ENCODE measurements at regions of chrX and their contacts with region 1.

Region 1: GRCh38 chrX:110853610-110854009 is 58.0 kb upstream of the CHRDL1 start:
- DNase-seq: no peak
- ATAC-seq: peak; percentile 72; the same call in 2 of the 3 replicates
- H3K4me3 ChIP-seq: no peak overlapping the region
- H3K27ac ChIP-seq: no peak overlapping the region
- H3K4me1 ChIP-seq: no peaks in the 10 kb centered on the region
- H3K27me3 ChIP-seq: no peaks in the 10 kb centered on the region
- CTCF ChIP-seq: peak; percentile 32; the same call in 1 of the 2 replicates
- EP300 ChIP-seq: no peak
- POLR2A ChIP-seq: no peak
- RAD21 ChIP-seq: no peak

Region 2: DNA sequence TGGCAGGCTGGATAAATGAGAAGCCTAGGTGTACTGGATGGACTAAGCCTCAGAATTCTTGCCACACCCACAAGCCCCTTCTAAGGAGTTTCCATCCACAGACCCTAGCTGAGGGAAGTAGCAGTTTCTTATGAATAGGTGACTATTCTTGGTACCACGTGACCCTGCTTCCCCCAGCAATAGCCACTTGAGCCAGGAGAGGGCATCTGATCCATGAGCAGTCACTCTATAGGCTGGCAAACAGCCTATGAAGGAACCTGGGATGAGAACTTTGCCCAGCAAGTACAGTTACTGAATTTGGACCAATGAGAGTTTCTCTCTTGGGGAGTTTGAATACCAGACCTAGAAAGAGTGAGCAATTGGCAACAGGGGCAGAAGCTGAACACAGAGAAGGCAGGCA is 411.0 kb before region 1 on chrX:
- CTCF ChIA-PET with region 1: no interaction called
- POLR2A ChIA-PET with region 1: no interaction called
- in situ Hi-C with region 1: loop called (anchors 10 kb)
- intact Hi-C with region 1: no loop called
- DNase-seq: peak; percentile 54
- ATAC-seq: peak; percentile 90
- H3K4me3 ChIP-seq: no peak overlapping the region
- H3K27ac ChIP-seq: no peak overlapping the region
- H3K4me1 ChIP-seq: peaks cover 9% of the 10 kb centered on the region; the same call in 1 of the 2 replicates
- H3K27me3 ChIP-seq: no peaks in the 10 kb centered on the region
- CTCF ChIP-seq: peak; percentile 33
- EP300 ChIP-seq: no peak
- POLR2A ChIP-seq: no peak
- RAD21 ChIP-seq: no peak

Region 3: DNA sequence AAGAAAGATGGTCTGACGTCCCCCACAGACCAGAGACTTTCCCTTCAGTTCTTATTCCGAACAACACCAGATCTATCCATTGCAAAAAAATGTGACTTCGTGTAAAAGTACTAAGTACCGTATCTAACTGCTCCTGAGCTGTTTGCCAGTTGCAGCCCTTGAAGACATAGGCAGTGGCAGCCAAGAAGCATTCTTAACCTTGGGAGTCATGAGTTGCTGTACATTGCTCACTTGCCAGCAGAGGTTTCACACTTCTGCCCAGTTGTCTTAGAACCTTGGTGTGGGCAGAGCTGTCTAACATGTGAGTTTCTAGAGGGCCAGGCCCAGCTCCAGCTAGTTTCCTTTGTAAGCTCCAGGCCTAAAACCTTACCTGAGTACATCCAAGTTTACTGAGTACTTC is 47.5 kb before region 1 on chrX:
- CTCF ChIA-PET with region 1: no interaction called
- POLR2A ChIA-PET with region 1: no interaction called
- in situ Hi-C with region 1: no loop called
- intact Hi-C with region 1: no loop called
- DNase-seq: no peak
- ATAC-seq: no peak
- H3K4me3 ChIP-seq: no peak overlapping the region
- H3K27ac ChIP-seq: no peak overlapping the region
- H3K4me1 ChIP-seq: no peaks in the 10 kb centered on the region
- H3K27me3 ChIP-seq: no peaks in the 10 kb centered on the region
- CTCF ChIP-seq: no peak
- EP300 ChIP-seq: no peak
- POLR2A ChIP-seq: no peak
- RAD21 ChIP-seq: no peak

Region 4: DNA sequence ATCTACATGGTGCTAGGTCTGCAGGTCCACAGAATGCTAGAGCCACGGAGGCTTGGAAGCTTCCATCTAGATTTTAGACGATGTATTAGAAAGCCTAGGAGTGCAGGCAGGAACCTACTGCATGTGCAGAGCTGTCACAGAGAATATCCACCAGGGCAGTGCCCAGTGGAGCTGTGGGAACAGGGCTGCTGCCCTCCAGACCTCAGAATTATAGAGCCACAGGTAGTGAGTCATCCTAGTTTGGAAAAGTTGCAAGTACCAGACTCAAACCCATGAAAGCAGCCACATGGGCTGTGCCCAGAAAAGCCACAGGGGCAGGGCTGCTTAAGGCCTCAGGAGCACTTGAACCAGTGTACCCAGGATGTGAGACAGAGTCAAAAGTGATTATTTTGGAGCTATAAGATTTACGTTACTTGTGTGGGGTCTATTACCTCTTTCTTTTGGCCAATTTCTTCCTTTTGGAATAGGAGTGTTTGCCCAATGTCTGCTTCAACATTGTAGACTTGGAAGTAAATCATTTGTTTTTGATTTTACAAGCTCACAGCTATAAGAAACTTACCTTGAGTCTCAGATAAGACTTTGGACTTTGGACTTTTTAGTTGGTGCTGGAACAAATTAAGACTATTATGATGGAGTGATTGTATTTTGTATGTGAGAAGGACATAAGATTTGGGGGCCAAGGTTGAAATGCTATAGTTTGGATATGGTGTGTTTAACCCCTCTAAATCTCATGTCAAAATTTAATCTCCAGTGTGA is 85.5 kb after region 1 on chrX:
- CTCF ChIA-PET with region 1: no interaction called
- POLR2A ChIA-PET with region 1: no interaction called
- in situ Hi-C with region 1: no loop called
- intact Hi-C with region 1: no loop called
- DNase-seq: no peak
- ATAC-seq: no peak
- H3K4me3 ChIP-seq: no peak overlapping the region
- H3K27ac ChIP-seq: no peak overlapping the region
- H3K4me1 ChIP-seq: no peaks in the 10 kb centered on the region
- H3K27me3 ChIP-seq: no peaks in the 10 kb centered on the region
- CTCF ChIP-seq: no peak
- EP300 ChIP-seq: no peak
- POLR2A ChIP-seq: no peak
- RAD21 ChIP-seq: no peak

Measured in HepG2 (cell line).